Caco-2 (cell line): ENCODE measurements at regions of chr10 and their contacts with region 1.

Region 1: DNA sequence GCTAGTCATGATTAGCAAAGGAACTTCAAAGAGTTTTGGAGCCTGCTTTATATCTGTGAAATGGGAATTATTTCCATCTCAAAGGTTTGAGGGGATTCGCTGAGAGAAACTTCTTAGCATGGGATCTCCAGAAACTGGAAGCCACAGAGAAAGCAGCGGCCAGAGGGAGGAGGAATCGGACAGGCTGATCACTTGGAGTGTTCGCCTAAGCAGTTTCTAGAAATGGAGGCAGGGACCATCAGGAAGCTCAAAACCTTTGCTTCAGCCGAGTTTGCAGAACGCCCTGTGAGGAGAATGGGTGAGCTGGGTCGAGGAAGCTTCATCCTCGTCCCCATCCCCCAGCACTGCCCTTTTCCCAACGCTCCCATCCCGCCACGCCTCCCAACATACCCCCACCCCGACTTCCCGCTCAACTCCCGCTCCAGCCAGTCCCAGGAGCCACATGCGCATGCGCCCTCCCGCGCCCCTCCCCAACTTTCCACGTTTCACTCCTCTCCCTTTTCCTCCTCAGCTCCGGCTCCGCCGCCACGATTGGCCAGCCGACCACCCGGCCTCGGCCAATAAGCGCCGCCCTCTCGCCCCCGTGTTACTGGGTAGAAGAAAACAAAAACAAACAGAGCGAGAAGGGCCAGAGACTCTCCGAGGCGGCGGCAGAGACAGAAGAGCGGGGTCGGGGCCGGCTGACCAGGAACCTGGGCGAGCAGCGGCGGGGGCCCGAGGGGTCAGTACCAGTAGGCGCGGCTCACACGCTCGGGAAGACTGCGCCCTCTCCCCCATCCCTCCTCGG is at the start of gene PDCD4:
- DNase-seq: peak; percentile 99 to 100
- H3K4me3 ChIP-seq: peak within 1 kb of the TSS; percentile 72
- H3K4me3 Mint-ChIP-seq: peak within 1 kb of the TSS; percentile 85
- H3K27ac Mint-ChIP-seq: peak within 1 kb of the TSS; percentile 93
- H3K4me1 ChIP-seq: peaks cover 10% of the 10 kb centered on the region; the same call in 1 of the 2 replicates
- H3K4me1 Mint-ChIP-seq: peaks cover 12% of the 10 kb centered on the region
- H3K27me3 ChIP-seq: no peaks in the 10 kb centered on the region
- H3K27me3 Mint-ChIP-seq: no peaks in the 10 kb centered on the region
- CTCF ChIP-seq: no peak
- total RNA-seq, gene PDCD4: 65.5 and 66.1 TPM in 2 replicates

Region 2: DNA sequence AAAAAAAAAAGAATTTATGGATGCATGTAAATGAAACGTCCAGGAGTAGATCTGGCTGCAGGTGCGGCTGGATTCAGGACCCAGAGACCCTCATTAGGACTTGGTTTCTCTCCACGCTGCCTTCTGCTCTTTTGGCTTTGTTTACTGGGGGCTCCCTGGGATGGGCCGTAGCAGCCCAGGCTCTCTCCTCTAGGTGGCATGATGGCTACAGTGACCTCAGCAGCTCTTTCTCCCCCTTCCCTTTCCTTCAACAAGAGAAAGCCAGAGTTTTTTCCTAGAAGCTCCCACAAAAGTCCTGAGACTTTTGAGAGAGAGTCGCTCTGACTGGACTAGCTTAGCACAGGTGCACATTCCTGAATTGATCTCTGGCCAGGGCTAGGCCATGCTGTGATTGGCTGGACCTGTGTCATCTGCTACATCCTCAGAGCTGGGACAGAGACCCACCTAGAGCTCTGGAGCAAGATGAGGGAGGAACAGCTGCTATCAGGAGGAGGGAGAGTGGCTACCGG is 67.6 kb before region 1 on chr10:
- CTCF ChIA-PET with region 1: interaction called, 7 read pairs
- POLR2A ChIA-PET with region 1: interaction called, 9 read pairs
- intact Hi-C with region 1: loop called (anchors 1 kb)
- DNase-seq: peak; percentile 55 to 72
- H3K4me3 ChIP-seq: no peak overlapping the region
- H3K4me3 Mint-ChIP-seq: no peak overlapping the region
- H3K27ac Mint-ChIP-seq: peak overlapping the region; percentile 68
- H3K4me1 ChIP-seq: peaks cover 6% of the 10 kb centered on the region
- H3K4me1 Mint-ChIP-seq: peaks cover 13% of the 10 kb centered on the region
- H3K27me3 ChIP-seq: no peaks in the 10 kb centered on the region
- H3K27me3 Mint-ChIP-seq: peaks cover 3% of the 10 kb centered on the region
- CTCF ChIP-seq: peak; percentile 55 to 92

Region 3: GRCh38 chr10:110822712-110823323 is 48.7 kb before region 1 on chr10:
- CTCF ChIA-PET with region 1: interaction called, 3 read pairs
- POLR2A ChIA-PET with region 1: no interaction called
- intact Hi-C with region 1: loop called (anchors 5 kb)
- DNase-seq: peak in 1 of 2 experiments; percentile 55
- H3K4me3 ChIP-seq: no peak overlapping the region
- H3K4me3 Mint-ChIP-seq: no peak overlapping the region
- H3K27ac Mint-ChIP-seq: peak overlapping the region; percentile 6
- H3K4me1 ChIP-seq: 0 out of 2 replicates have a peak, but pooled peaks cover 3% of the 10 kb centered on the region
- H3K4me1 Mint-ChIP-seq: peaks cover 15% of the 10 kb centered on the region
- H3K27me3 ChIP-seq: no peaks in the 10 kb centered on the region
- H3K27me3 Mint-ChIP-seq: no peaks in the 10 kb centered on the region
- CTCF ChIP-seq: no peak

Region 4: DNA sequence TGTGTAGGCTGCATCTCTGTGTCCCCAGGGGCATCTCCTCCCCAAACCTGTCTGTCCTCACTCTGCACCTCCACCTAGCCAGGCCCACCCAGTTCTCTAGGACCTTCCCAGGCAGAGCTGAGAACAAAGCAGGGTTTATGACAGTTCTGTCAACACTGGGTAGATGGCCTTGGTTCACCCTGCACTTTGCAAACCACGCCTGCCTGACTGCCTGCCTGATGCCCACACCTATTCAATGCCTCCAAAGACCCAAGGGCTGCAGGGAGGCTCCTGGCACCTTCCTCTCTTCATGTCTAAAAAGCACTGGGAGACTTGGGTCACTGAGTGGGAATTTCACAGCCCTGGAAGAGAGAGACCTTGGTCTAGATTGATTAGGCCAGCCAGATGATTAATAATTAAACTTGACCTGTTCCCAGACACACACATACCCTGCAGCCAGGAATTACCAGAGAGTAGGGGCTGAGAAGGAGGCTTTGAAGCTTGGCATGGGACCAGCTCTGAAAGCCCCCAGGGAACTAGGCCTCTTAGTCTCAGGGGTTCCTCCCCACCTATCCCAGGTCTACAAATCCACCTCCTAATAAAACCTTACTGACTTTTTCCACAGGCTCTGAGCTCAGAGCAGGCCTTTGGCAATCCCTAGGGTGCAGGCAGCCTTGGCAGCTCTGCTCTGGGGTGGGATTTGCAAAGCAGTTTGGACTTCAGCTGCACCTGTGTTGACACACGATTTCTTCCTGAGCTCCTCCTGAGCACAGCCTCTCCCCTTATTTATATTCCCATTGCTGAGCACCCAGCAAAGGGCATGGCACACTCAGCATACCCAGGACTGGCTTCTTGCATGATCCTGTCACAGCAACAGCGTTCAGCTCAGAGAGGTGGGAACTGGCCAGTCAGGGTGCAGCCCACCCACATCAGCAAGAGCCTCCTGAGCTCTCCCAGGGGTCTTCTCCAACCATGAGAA is 25.5 kb before region 1 on chr10:
- CTCF ChIA-PET with region 1: interaction called, 5 read pairs
- POLR2A ChIA-PET with region 1: interaction called, 10 read pairs
- intact Hi-C with region 1: no loop called
- DNase-seq: peak; percentile 66 to 67
- H3K4me3 ChIP-seq: no peak overlapping the region
- H3K4me3 Mint-ChIP-seq: no peak overlapping the region
- H3K27ac Mint-ChIP-seq: peak overlapping the region; percentile 45
- H3K4me1 ChIP-seq: peaks cover 17% of the 10 kb centered on the region
- H3K4me1 Mint-ChIP-seq: peaks cover 27% of the 10 kb centered on the region
- H3K27me3 ChIP-seq: no peaks in the 10 kb centered on the region
- H3K27me3 Mint-ChIP-seq: no peaks in the 10 kb centered on the region
- CTCF ChIP-seq: no peak

Region 5: DNA sequence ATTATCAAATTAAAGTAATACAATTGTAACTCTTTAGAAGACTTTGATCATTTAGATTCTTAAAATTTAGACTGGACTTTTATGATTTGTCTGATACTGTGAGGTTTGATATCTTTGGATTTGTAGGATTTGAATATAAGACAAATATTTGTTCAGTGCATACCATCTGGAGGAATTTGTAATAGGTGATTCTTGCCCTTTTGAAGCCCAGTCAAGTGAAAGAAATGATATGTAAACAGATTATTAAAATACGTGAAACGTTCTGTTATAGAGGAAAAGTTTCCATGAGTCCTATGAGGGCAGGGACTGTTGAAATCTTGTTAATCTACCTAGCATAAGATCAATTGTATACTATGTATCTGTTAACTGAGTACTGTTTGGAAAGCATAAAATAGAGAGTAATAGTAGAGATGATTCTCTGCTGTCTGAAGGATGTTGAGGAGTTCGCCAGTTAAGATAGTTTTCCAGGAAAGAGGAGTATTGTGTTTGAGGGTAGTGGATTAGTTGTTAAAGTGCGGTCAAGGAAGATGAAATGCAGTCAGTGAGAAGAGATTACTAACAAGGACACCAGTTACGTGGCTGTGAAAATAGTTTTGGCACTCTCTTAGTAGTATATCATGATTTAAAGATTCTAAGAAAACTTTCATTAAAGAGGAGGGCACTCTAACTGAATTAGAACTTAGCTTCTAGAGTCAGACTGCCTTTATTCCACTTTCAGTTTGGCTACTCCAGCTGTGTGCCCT is 14.6 kb after region 1 on chr10:
- CTCF ChIA-PET with region 1: interaction called, 3 read pairs
- POLR2A ChIA-PET with region 1: interaction called, 3 read pairs
- intact Hi-C with region 1: loop called (anchors 2 kb)
- DNase-seq: no peak
- H3K4me3 ChIP-seq: no peak overlapping the region
- H3K4me3 Mint-ChIP-seq: peak overlapping the region; percentile 1
- H3K27ac Mint-ChIP-seq: peak overlapping the region; percentile 25
- H3K4me1 ChIP-seq: peaks cover 9% of the 10 kb centered on the region; the same call in 1 of the 2 replicates
- H3K4me1 Mint-ChIP-seq: peaks cover 13% of the 10 kb centered on the region
- H3K27me3 ChIP-seq: no peaks in the 10 kb centered on the region
- H3K27me3 Mint-ChIP-seq: no peaks in the 10 kb centered on the region
- CTCF ChIP-seq: no peak

Region 6: GRCh38 chr10:110893559-110894179 is 22.2 kb after region 1 on chr10:
- CTCF ChIA-PET with region 1: no interaction called
- POLR2A ChIA-PET with region 1: no interaction called
- intact Hi-C with region 1: loop called (anchors 1 kb)
- DNase-seq: peak in 1 of 2 experiments; percentile 29
- H3K4me3 ChIP-seq: no peak overlapping the region
- H3K4me3 Mint-ChIP-seq: no peak overlapping the region
- H3K27ac Mint-ChIP-seq: no peak overlapping the region
- H3K4me1 ChIP-seq: peaks cover 7% of the 10 kb centered on the region; the same call in 1 of the 2 replicates
- H3K4me1 Mint-ChIP-seq: peaks cover 17% of the 10 kb centered on the region
- H3K27me3 ChIP-seq: no peaks in the 10 kb centered on the region
- H3K27me3 Mint-ChIP-seq: no peaks in the 10 kb centered on the region
- CTCF ChIP-seq: peak; percentile 35 to 48